ENCODE measurements at regions of chr5 and their contacts with region 1.

Region 1: DNA sequence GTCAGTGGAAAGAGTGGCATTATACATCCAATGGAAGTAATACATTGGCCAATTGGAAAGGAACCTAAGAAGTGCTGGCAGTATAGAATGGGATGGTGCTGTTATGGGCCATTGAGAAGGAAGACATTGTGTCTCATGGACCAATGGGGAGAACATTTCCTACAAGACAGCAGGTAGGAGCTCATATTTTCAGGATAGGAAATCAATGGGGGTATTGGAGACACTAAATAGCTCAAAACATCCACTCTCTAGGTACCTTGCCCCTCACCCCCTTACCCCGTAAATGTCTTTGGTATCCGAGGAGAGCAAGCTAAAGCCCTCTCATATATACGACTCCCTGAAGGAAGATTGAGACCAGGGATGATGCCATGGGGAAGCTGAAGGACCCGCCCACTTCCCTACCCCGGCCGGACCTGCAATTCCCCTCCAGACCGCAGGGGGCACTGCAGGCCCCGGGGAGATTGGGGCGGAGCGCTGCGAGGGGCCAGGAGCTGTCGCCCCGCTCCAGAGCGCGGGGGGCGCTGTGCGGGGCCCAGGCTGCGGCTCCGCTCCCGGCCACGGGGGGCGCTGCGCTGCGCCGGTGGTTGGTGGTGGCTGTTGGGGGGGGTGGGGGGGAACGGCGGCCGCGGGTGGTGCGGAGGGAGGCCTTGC is at the start of gene KDM3B:
- DNase-seq: peak; percentile 82 to 97 (median 91)
- ATAC-seq: peak; percentile 83
- H3K4me3 ChIP-seq: peak within 1 kb of the TSS; percentile 99
- H3K4me3 Mint-ChIP-seq: peak within 1 kb of the TSS; percentile 95
- H3K27ac ChIP-seq: peak within 1 kb of the TSS; percentile 84 to 89
- H3K27ac Mint-ChIP-seq: peak within 1 kb of the TSS; percentile 94
- H3K4me1 ChIP-seq: peaks cover 24% of the 10 kb centered on the region
- H3K4me1 Mint-ChIP-seq: peaks cover 42% of the 10 kb centered on the region
- H3K27me3 ChIP-seq: no peaks in the 10 kb centered on the region
- H3K27me3 Mint-ChIP-seq: no peaks in the 10 kb centered on the region
- CTCF ChIP-seq: peak; percentile 90
- total RNA-seq, gene KDM3B: 59.5 to 66.0 TPM

Region 2: DNA sequence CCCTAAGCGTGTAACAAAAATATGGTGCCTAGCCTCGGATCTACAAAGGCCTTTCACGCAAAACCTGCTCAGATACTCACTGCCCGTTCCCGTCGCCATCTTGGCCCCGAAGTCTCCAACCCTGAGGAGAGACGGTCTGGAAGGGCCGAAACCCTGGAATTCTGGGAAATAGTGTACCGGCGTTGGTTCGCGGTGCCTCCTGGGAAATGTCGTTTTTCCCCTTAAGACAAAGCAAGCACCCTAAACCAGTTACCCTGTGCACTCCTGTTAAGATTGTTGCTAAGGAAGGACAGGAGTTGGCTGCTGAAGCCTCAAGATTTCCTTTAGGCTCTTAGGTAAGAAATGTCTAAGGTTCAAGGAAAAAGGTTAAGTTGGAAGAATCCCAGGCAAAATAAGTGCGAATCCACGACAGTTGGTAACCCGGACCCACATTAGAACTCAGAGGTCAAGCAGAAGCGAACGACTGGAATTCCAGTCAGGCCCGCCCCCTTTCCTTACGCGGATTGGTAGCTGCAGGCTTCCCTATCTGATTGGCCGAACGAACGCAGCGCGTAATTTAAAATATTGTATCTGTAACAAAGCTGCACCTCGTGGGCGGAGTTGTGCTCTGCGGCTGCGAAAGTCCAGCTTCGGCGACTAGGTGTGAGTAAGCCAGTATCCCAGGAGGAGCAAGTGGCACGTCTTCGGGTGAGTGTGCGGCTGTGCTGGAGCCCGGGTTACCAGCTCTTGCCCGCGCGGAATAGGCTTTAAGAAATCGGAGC is 173.5 kb before region 1 on chr5 and contains the starts of genes BRD8 and KIF20A:
- CTCF ChIA-PET with region 1: interaction called, 19 read pairs
- POLR2A ChIA-PET with region 1: interaction called, 11 read pairs
- intact Hi-C with region 1: loop called (anchors 1 to 10 kb)
- DNase-seq: peak; percentile 77 to 94 (median 85)
- ATAC-seq: peak; percentile 86
- H3K4me3 ChIP-seq: peak within 1 kb of the TSS; percentile 94
- H3K4me3 Mint-ChIP-seq: no peak within 1 kb of the TSS
- H3K27ac ChIP-seq: peak within 1 kb of the TSS; percentile 55 to 76
- H3K27ac Mint-ChIP-seq: no peak within 1 kb of the TSS
- H3K4me1 ChIP-seq: peaks cover 27% of the 10 kb centered on the region
- H3K4me1 Mint-ChIP-seq: peaks cover 11% of the 10 kb centered on the region
- H3K27me3 ChIP-seq: no peaks in the 10 kb centered on the region
- H3K27me3 Mint-ChIP-seq: no peaks in the 10 kb centered on the region
- CTCF ChIP-seq: no peak
- total RNA-seq, gene BRD8: 6.9 to 9.6 TPM
- total RNA-seq, gene KIF20A: not detected

Region 3: GRCh38 chr5:138331449-138332368 is 20.5 kb before region 1 on chr5 and contains the start of gene CDC25C:
- CTCF ChIA-PET with region 1: interaction called, 248 read pairs
- POLR2A ChIA-PET with region 1: interaction called, 293 read pairs
- intact Hi-C with region 1: loop called in 1 of 2 experiments (anchors 2 kb)
- DNase-seq: peak; percentile 92 to 99 (median 95)
- ATAC-seq: peak; percentile 99
- H3K4me3 ChIP-seq: peak within 1 kb of the TSS; percentile 68
- H3K4me3 Mint-ChIP-seq: peak within 1 kb of the TSS; percentile 83
- H3K27ac ChIP-seq: no peak within 1 kb of the TSS
- H3K27ac Mint-ChIP-seq: peak within 1 kb of the TSS; percentile 40
- H3K4me1 ChIP-seq: peaks cover 13% of the 10 kb centered on the region
- H3K4me1 Mint-ChIP-seq: peaks cover 8% of the 10 kb centered on the region
- H3K27me3 ChIP-seq: no peaks in the 10 kb centered on the region
- H3K27me3 Mint-ChIP-seq: no peaks in the 10 kb centered on the region
- CTCF ChIP-seq: no peak
- total RNA-seq, gene CDC25C: not detected

Region 4: DNA sequence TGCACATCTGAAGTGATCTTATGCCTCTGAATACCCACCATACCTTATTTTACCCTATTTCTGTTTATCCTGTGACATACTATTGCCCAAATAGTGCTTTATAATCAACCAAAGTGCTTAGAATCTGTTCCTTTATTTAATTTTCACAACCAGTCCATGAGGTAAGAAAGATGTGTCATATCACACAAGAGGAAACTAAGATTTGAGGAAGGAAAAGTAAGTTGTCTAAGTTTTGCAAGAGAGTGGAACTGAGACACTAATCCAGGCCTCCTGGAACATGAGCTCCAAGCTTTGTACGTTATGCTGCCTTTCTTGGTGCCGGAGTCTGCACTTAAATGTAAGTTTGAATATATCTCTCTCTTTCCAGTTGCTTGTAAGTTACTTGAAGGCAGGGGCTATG is 17.5 kb after region 1 on chr5:
- CTCF ChIA-PET with region 1: interaction called, 32 read pairs
- POLR2A ChIA-PET with region 1: interaction called, 12 read pairs
- intact Hi-C with region 1: no loop called
- DNase-seq: peak in 3 of 14 experiments; percentile 17 to 39 (median 36)
- ATAC-seq: no peak
- H3K4me3 ChIP-seq: no peak overlapping the region
- H3K4me3 Mint-ChIP-seq: no peak overlapping the region
- H3K27ac ChIP-seq: no peak overlapping the region
- H3K27ac Mint-ChIP-seq: peak overlapping the region; percentile 24
- H3K4me1 ChIP-seq: peaks cover 18% of the 10 kb centered on the region
- H3K4me1 Mint-ChIP-seq: peaks cover 50% of the 10 kb centered on the region
- H3K27me3 ChIP-seq: no peaks in the 10 kb centered on the region
- H3K27me3 Mint-ChIP-seq: no peaks in the 10 kb centered on the region
- CTCF ChIP-seq: no peak

Region 5: DNA sequence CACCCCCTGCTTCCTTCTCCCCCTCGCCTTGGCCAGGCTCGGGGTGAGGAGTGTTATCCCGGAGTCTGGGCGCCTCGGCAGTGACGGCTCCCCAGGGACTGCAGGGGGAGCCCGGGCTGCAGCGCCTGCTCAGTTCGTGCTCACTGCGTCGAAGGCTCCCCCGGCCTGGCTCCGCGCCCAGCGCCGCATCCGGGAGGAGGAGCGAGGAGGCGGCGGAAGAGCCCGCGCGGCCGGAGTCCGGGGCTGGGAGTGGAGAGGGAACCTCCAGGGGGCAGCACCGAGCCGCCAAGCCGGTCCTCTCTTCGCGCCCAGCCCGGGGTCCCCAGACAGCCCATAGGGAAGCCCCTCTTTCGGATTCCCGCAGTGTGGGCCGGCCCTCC is 111.8 kb after region 1 on chr5:
- CTCF ChIA-PET with region 1: interaction called, 8 read pairs
- POLR2A ChIA-PET with region 1: interaction called, 26 read pairs
- intact Hi-C with region 1: no loop called
- DNase-seq: peak; percentile 85 to 98 (median 93)
- ATAC-seq: peak; percentile 51
- H3K4me3 ChIP-seq: peak overlapping the region; percentile 60
- H3K4me3 Mint-ChIP-seq: peak overlapping the region; percentile 96
- H3K27ac ChIP-seq: peak overlapping the region; percentile 89 to 94
- H3K27ac Mint-ChIP-seq: peak overlapping the region; percentile 93
- H3K4me1 ChIP-seq: peaks cover 60% of the 10 kb centered on the region
- H3K4me1 Mint-ChIP-seq: peaks cover 50% of the 10 kb centered on the region
- H3K27me3 ChIP-seq: no peaks in the 10 kb centered on the region
- H3K27me3 Mint-ChIP-seq: no peaks in the 10 kb centered on the region
- CTCF ChIP-seq: peak; percentile 85